RWPE1 (cell line): ENCODE measurements at regions of chr17 and their contacts with region 1.

Region 1: DNA sequence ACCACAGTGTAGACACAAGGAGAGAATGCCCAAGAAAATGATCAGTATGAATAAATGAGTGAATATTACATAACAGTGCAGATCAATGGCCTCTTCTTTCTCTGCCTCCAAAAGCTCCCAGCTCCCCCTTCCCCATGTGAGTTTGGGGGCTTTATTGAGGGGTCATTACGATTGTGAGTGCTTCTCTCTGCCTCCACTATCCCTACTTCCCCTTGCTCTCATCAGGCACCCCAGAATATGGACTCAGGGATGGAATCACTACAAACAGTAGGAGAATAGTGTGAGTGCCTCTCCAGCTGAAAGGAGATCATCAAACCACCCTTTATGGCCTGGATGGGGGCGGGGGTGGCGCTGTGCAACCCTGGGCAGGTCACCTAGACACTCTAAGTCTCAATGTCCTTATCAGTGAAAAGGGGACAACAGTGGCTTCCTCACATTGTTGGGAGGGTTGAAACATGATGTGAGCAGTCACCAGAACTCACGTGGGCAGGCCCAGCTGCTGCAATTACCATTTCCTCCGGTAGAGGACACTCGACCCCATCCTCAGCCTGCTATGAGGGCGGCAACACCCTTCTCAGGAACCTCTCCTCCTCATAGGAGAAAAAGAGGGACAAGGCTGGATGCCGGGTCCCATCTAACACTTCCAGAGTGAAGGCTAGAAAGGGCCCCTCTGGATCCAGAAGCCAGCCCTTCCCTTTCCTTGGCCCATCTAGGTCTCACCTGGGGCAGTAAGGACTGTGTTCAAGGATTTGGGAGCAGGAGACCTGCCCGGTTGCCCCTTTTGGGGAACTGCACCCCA is 2.1 kb upstream of the EPOP start:
- DNase-seq: peak; percentile 83
- H3K27ac ChIP-seq: no peak overlapping the region; the same call in 1 of the 2 replicates
- CTCF ChIP-seq: peak; percentile 94

Region 2: GRCh38 chr17:38628441-38628840 is 48.5 kb before region 1 on chr17:
- CTCF ChIA-PET with region 1: no interaction called
- POLR2A ChIA-PET with region 1: no interaction called
- DNase-seq: peak; percentile 20
- H3K27ac ChIP-seq: no peak overlapping the region
- CTCF ChIP-seq: no peak

Region 3: GRCh38 chr17:38704645-38705522 is 28.0 kb after region 1 on chr17 and contains the start of gene MLLT6:
- CTCF ChIA-PET with region 1: interaction called, 10 read pairs
- POLR2A ChIA-PET with region 1: interaction called, 4 read pairs
- DNase-seq: peak; percentile 74
- H3K27ac ChIP-seq: peak within 1 kb of the TSS; percentile 93
- CTCF ChIP-seq: no peak